T-cell (primary cell): ENCODE measurements at regions of chr19 and their contacts with region 1.

Region 1: DNA sequence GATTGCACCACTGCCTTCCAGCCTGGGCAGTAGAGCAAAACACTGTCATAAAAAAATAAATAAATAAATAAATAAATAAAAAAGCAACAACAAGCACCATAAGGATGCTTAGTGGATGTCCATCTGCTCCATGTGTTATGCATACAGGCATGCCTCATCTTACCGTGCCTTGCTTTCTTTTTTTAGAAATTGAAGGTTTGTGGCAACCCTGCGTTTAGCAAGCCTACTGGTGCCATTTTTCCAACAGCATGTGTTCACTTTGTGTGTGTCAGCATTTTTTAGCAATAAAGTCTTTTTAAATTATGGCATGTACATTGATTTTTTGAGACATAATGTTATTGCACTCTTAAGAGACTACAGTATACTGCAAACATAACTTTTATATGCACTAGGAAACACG is 68.3 kb downstream of the PEPD start:
- DNase-seq: no peak
- ATAC-seq: no peak
- H3K4me3 ChIP-seq: no peak overlapping the region
- H3K4me3 Mint-ChIP-seq: no peak overlapping the region
- H3K27ac ChIP-seq: no peak overlapping the region
- H3K27ac Mint-ChIP-seq: no peak overlapping the region
- H3K4me1 ChIP-seq: no peaks in the 10 kb centered on the region
- H3K4me1 Mint-ChIP-seq: no peaks in the 10 kb centered on the region
- H3K27me3 ChIP-seq: no peaks in the 10 kb centered on the region
- H3K27me3 Mint-ChIP-seq: no peaks in the 10 kb centered on the region

Region 2: GRCh38 chr19:32924203-32924930 is 528.9 kb before region 1 on chr19:
- CTCF ChIA-PET with region 1: no interaction called
- POLR2A ChIA-PET with region 1: interaction called in 1 of 2 experiments, 10 read pairs
- DNase-seq: no peak
- ATAC-seq: no peak
- H3K4me3 ChIP-seq: no peak overlapping the region
- H3K4me3 Mint-ChIP-seq: no peak overlapping the region
- H3K27ac ChIP-seq: no peak overlapping the region
- H3K27ac Mint-ChIP-seq: no peak overlapping the region
- H3K4me1 ChIP-seq: no peaks in the 10 kb centered on the region
- H3K4me1 Mint-ChIP-seq: no peaks in the 10 kb centered on the region
- H3K27me3 ChIP-seq: no peaks in the 10 kb centered on the region
- H3K27me3 Mint-ChIP-seq: no peaks in the 10 kb centered on the region

Region 3: GRCh38 chr19:33416307-33417215 is 36.7 kb before region 1 on chr19:
- CTCF ChIA-PET with region 1: no interaction called
- POLR2A ChIA-PET with region 1: no interaction called
- DNase-seq: peak; percentile 25 to 69 (median 58)
- ATAC-seq: peak; percentile 71 to 79 (median 77)
- H3K4me3 ChIP-seq: peak overlapping the region; percentile 8 to 31
- H3K4me3 Mint-ChIP-seq: peak overlapping the region; percentile 62 to 67 (median 64)
- H3K27ac ChIP-seq: no peak overlapping the region
- H3K27ac Mint-ChIP-seq: peak overlapping the region in 1 of 2 donors; percentile 46
- H3K4me1 ChIP-seq: peaks cover 0 to 9% of the 10 kb centered on the region in 2 experiments
- H3K4me1 Mint-ChIP-seq: peaks cover 7 to 10% (median 8%) of the 10 kb centered on the region in 3 donors
- H3K27me3 ChIP-seq: no peaks in the 10 kb centered on the region
- H3K27me3 Mint-ChIP-seq: no peaks in the 10 kb centered on the region